ENCODE measurements at regions of chr4 and their contacts with region 1.

Region 1: GRCh38 chr4:147866532-147867271 is 134.8 kb downstream of the ARHGAP10 start:
- DNase-seq: peak; percentile 55
- H3K4me3 ChIP-seq: no peak overlapping the region
- CTCF ChIP-seq: peak; percentile 89

Region 2: DNA sequence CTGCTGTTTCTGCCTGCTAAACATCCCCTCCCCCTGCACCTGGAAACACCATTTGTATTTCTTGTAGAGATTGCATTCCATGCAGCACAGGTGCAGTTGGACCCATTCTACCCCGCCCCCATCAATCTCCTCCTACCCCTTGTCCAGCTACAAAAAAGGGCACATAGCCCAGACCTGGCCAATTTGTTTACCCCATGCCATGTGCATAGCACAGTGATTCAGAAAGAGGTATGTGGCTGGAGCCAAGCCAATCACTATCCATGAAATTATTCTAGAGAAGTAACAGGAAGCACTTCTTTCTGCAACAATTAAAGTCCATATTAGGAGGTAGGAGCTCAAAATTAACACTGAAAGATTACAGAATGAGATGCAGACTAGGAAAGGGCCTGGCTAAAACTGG is 269.7 kb before region 1 on chr4:
- CTCF ChIA-PET with region 1: interaction called, 130 read pairs
- POLR2A ChIA-PET with region 1: no interaction called
- DNase-seq: no peak
- H3K4me3 ChIP-seq: no peak overlapping the region
- CTCF ChIP-seq: no peak

Region 3: GRCh38 chr4:147658501-147658900 is 208.2 kb before region 1 on chr4:
- CTCF ChIA-PET with region 1: interaction called, 17 read pairs
- POLR2A ChIA-PET with region 1: no interaction called
- DNase-seq: no peak
- H3K4me3 ChIP-seq: no peak overlapping the region
- CTCF ChIP-seq: no peak

Region 4: DNA sequence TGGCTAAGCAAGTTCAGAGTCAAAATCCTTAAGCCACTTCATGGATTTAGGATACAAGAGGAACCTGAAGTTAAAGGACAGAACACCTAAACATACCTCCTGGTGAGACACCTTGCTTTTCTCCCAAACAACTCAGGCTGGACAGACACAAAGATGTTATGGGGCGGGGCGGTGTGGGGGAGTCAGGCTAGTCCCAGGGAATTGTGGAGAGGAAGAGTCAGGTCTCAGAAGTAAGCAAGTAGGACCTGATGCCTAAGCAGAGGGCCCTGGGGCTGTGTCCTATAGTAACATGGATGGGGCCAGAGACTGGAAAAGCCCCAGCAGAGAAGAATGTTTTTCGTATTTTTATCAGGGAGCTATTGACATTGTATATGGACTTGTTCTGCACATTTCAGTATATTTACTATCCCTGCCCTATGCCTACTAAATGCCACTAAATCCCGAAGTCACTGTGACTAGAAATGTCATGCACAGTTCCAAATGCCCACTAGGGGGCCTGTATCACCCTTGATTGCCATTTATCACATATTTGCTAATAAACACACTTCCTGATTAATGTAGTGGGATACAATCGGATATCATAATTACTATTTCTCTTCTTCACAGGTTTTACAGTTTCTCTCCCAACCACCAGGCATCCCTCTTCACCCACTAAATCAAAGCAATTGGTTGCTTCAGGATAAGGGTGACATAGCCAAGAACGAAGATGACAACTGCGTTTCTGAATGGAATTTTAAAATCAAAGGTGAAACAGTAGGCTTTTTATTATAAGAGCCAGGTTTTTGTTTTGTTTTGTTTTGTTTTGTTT is 158.6 kb before region 1 on chr4:
- CTCF ChIA-PET with region 1: interaction called, 421 read pairs
- POLR2A ChIA-PET with region 1: no interaction called
- DNase-seq: no peak
- H3K4me3 ChIP-seq: no peak overlapping the region
- CTCF ChIP-seq: peak; percentile 67

Region 5: GRCh38 chr4:147772459-147772969 is 94.2 kb before region 1 on chr4:
- CTCF ChIA-PET with region 1: interaction called, 10 read pairs
- POLR2A ChIA-PET with region 1: no interaction called
- DNase-seq: peak; percentile 63
- H3K4me3 ChIP-seq: no peak overlapping the region
- CTCF ChIP-seq: no peak

Region 6: DNA sequence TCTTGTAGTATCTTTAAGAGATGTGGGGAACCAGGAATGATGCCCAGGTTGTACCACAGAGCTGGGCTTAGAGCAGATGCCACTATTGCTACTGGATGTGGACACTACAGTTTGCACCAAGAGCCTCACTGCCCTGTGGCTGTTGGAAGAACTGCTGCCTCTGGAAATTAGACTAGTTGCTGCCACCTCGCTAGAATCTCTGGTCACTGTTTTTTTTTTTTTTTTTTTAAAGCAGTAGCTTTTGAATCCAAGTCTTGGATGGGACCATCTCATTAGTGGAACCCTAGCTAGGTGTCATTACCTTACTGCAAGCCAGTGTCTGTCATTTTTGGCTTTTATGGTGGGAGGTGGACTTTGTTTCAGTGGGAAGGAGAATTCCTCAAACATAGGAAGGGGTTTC is 29.3 kb before region 1 on chr4:
- CTCF ChIA-PET with region 1: interaction called, 99 read pairs
- POLR2A ChIA-PET with region 1: no interaction called
- DNase-seq: no peak
- H3K4me3 ChIP-seq: no peak overlapping the region
- CTCF ChIP-seq: no peak

Region 7: DNA sequence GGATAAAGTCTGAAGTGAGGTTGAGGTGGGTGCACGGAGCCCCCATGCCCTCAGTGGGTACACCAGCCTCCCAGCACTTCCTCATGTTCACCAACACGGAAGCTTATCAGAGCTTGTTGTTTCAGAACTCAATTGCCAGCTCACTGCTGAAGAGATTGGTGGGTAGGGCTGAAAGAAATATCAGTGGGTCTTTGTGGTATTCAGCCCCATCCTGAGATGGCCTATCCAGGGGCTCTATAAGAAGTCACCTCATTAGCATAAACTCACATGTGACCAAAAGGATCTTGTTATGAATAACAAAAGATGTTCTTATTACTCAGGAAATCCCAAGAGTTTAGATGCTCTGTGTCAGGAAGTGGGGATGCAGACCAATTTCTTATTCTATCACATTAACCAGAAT is 42.5 kb after region 1 on chr4:
- CTCF ChIA-PET with region 1: interaction called, 11 read pairs
- POLR2A ChIA-PET with region 1: no interaction called
- DNase-seq: no peak
- H3K4me3 ChIP-seq: no peak overlapping the region
- CTCF ChIP-seq: no peak

Region 8: GRCh38 chr4:148030193-148030873 is 163.6 kb after region 1 on chr4:
- CTCF ChIA-PET with region 1: no interaction called
- POLR2A ChIA-PET with region 1: no interaction called
- DNase-seq: peak; percentile 17
- H3K4me3 ChIP-seq: no peak overlapping the region
- CTCF ChIP-seq: no peak

Measured in AG04449 (cell line).